HepG2 (cell line): ENCODE measurements at regions of chr3 and their contacts with region 1.

Region 1: DNA sequence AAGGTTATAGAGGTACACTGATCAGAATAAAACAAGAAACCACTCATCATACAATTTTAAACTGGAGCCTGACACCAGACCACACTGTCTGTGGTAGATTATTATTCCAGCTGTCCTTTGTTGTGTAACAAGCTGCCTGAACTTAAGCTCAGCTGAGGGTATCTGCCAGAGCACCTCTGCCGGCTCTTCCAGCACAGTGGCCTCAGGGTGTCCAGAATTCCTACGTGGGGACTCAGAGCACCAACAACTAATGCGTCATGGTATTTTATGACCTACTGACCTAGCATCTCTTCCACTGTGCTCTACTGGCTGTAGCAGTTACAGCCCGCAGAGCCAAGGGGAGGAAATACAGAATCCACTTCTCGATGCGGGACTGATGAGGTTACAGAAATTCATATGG is 15.6 kb upstream of the RAF1 start:
- DNase-seq: peak; percentile 38
- ATAC-seq: peak; percentile 51
- H3K4me3 ChIP-seq: no peak overlapping the region
- H3K27ac ChIP-seq: no peak overlapping the region
- H3K4me1 ChIP-seq: peaks cover 47% of the 10 kb centered on the region
- H3K27me3 ChIP-seq: no peaks in the 10 kb centered on the region
- CTCF ChIP-seq: no peak
- EP300 ChIP-seq: no peak
- POLR2A ChIP-seq: no peak
- RAD21 ChIP-seq: no peak

Region 2: GRCh38 chr3:12613250-12613649 is 66.2 kb before region 1 on chr3:
- CTCF ChIA-PET with region 1: no interaction called
- POLR2A ChIA-PET with region 1: no interaction called
- in situ Hi-C with region 1: no loop called
- intact Hi-C with region 1: no loop called
- DNase-seq: no peak
- ATAC-seq: no peak
- H3K4me3 ChIP-seq: no peak overlapping the region
- H3K27ac ChIP-seq: no peak overlapping the region
- H3K4me1 ChIP-seq: no peaks in the 10 kb centered on the region
- H3K27me3 ChIP-seq: no peaks in the 10 kb centered on the region
- CTCF ChIP-seq: no peak
- EP300 ChIP-seq: no peak
- POLR2A ChIP-seq: no peak
- RAD21 ChIP-seq: no peak

Region 3: GRCh38 chr3:12629560-12629959 is 49.9 kb before region 1 on chr3:
- CTCF ChIA-PET with region 1: no interaction called
- POLR2A ChIA-PET with region 1: no interaction called
- in situ Hi-C with region 1: no loop called
- intact Hi-C with region 1: loop called (anchors 10 kb)
- DNase-seq: no peak
- ATAC-seq: no peak
- H3K4me3 ChIP-seq: no peak overlapping the region
- H3K27ac ChIP-seq: no peak overlapping the region
- H3K4me1 ChIP-seq: peaks cover 18% of the 10 kb centered on the region; the same call in 1 of the 2 replicates
- H3K27me3 ChIP-seq: no peaks in the 10 kb centered on the region
- CTCF ChIP-seq: no peak
- EP300 ChIP-seq: no peak
- POLR2A ChIP-seq: no peak
- RAD21 ChIP-seq: no peak

Region 4: GRCh38 chr3:12719984-12720898 is 40.8 kb after region 1 on chr3:
- CTCF ChIA-PET with region 1: no interaction called
- POLR2A ChIA-PET with region 1: no interaction called
- in situ Hi-C with region 1: no loop called
- intact Hi-C with region 1: no loop called
- DNase-seq: peak; percentile 84
- ATAC-seq: peak; percentile 98
- H3K4me3 ChIP-seq: no peak overlapping the region
- H3K27ac ChIP-seq: no peak overlapping the region
- H3K4me1 ChIP-seq: peaks cover 10% of the 10 kb centered on the region
- H3K27me3 ChIP-seq: no peaks in the 10 kb centered on the region
- CTCF ChIP-seq: peak; percentile 90
- EP300 ChIP-seq: no peak
- POLR2A ChIP-seq: no peak
- RAD21 ChIP-seq: peak; percentile 48; the same call in 1 of the 2 replicates